AG04449 (cell line): ENCODE measurements at regions of chr1 and their contacts with region 1.

Region 1: DNA sequence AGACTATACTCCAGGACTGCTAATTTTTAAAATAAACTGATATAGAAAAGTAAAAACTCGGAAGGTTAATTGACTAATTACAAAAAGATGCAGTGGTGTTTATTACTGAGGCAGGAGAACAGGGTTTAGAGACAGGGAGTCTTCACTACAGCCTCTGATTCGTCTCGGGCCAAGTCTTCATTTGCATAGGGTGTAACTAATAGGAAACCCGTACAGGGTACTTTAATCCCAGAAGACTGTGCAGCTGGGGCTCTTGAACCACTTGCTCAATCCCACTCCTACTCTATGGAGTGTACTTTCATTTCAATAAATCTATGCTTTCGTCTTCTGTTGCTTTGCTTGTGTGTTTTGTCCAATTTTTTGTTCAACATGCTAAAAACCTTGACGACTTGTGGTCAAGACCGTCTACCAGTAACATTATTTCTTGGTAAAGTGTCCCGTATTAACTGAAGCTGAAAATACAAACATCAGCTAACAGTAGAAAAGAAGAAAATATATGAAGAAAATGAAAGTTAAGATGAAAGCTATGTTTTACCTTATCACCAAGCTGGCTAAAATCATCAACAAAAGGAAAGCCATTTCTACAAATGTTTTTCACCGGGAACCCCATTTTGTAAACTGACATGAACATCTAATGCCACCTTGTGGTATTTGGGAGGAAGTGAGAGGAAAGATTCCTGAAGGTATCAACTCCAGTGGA is 8.0 kb downstream of the SDHB start:
- DNase-seq: no peak
- H3K4me3 ChIP-seq: no peak overlapping the region
- CTCF ChIP-seq: peak; percentile 51

Region 2: GRCh38 chr1:16967095-16967575 is 78.6 kb before region 1 on chr1:
- CTCF ChIA-PET with region 1: interaction called, 447 read pairs
- POLR2A ChIA-PET with region 1: no interaction called
- DNase-seq: no peak
- H3K4me3 ChIP-seq: no peak overlapping the region
- CTCF ChIP-seq: no peak

Region 3: DNA sequence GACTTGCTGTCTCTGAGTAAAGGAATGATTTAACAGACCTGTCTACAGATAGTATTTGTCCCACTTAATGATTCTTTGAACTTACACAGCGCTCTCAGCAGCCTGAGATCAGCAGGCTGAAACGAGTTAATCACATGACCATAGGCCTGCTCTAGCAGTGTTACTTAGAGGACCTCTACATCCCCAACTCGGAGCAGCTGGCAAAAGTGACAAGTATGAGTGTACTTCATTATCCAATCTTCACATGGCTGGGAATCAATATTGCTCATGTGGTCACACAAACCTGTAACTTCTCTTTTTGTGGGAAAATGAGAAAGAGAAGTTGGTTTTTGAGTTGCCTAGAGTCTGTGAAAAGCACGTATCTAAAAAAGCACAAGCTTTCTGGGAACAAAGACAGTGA is 22.7 kb before region 1 on chr1:
- CTCF ChIA-PET with region 1: interaction called, 31 read pairs
- POLR2A ChIA-PET with region 1: no interaction called
- DNase-seq: no peak
- H3K4me3 ChIP-seq: no peak overlapping the region
- CTCF ChIP-seq: no peak

Region 4: DNA sequence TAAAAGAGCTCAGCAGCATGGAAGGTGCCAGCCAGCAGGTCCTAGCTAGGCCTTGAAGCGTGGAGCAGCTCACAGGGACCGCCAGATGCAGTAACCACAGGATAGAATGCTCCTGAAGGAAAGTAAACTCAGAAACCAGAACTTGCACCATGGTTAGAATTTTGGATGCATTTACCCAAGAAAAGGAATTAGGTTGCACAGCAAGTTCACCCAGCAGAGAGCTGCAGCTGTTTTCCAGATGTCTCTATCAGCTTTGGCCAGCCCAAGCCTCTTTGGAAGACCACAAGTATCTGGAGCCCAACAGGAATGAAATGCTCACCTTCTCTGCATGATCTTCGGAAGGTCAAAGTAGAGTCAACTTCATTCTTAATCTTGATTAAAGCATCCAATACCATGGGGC is 13.0 kb before region 1 on chr1:
- CTCF ChIA-PET with region 1: interaction called, 25 read pairs
- POLR2A ChIA-PET with region 1: no interaction called
- DNase-seq: no peak
- H3K4me3 ChIP-seq: no peak overlapping the region
- CTCF ChIP-seq: no peak